Activated CD4-positive, alpha-beta T cell treated with anti-CD3 and anti-CD28 coated beads, Interleukin-2, amount 10 ng/mL, durations not matched to agents 24 days and 14 days (primary cell): ENCODE measurements at regions of chr6 and their contacts with region 1.

Region 1: GRCh38 chr6:90425161-90425641 is 128.6 kb upstream of the BACH2 start:
- DNase-seq: peak; percentile 78
- H3K4me3 Mint-ChIP-seq: peak overlapping the region; percentile 69
- H3K27ac Mint-ChIP-seq: peak overlapping the region; percentile 91
- H3K4me1 Mint-ChIP-seq: peaks cover 24% of the 10 kb centered on the region
- H3K27me3 Mint-ChIP-seq: no peaks in the 10 kb centered on the region

Region 2: DNA sequence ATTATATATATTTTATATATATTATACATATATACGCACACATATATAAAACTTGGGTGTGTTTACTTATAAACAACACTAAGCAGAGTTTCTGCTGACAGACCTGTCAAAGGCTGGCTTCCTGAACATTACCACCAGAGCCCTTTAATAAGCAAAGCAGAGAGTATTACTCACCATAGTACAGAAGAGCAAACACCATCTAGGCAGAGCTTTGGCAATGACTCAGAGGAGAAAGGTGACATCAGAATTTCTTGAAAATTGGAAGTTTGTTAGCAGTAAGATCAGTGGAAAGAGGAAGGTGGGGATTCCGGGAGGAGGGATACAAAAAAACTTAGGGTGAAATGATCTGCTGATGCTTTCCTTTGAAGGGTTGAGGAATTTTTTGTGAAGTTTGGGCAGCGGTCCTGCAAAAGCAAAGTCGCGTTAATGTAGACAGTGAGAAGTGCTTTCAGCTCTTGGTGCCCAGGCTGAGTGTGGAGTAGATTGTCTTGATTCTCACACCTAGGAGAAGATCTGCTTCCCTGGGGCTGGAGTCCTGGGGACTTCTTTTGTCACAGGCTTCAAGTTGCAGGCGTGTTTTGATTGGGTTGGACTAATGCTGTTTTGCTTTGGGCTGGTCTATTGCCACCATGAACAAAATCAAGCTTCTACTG is 18.9 kb before region 1 on chr6:
- intact Hi-C with region 1: loop called (anchors 1 kb)
- DNase-seq: peak; percentile 77
- H3K4me3 Mint-ChIP-seq: peak overlapping the region; percentile 12
- H3K27ac Mint-ChIP-seq: peak overlapping the region; percentile 82
- H3K4me1 Mint-ChIP-seq: peaks cover 67% of the 10 kb centered on the region
- H3K27me3 Mint-ChIP-seq: no peaks in the 10 kb centered on the region

Region 3: GRCh38 chr6:90411292-90411781 is 13.9 kb before region 1 on chr6:
- intact Hi-C with region 1: loop called (anchors 1 kb)
- DNase-seq: peak; percentile 86
- H3K4me3 Mint-ChIP-seq: peak overlapping the region; percentile 18
- H3K27ac Mint-ChIP-seq: peak overlapping the region; percentile 84
- H3K4me1 Mint-ChIP-seq: peaks cover 71% of the 10 kb centered on the region
- H3K27me3 Mint-ChIP-seq: peaks cover 2% of the 10 kb centered on the region

Region 4: DNA sequence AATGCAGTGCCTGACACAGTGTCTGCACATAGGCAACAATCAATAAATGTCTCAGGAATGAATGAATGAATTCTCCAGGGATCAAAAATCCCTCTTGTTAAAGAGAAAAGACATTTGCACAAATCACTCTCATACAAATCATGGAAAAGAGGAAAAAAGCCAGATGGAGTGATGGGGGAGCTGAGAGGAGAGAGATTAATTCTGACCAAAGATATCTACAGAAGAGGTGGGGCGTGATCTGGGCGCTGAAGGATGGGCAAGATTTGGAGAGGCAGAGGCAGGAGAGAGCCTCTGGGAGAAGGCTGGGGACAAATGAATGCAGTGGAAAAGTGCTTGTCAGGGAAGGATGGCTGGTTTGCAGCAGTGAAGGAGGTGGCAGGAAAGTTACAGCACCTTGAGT is 14.4 kb after region 1 on chr6:
- intact Hi-C with region 1: no loop called
- DNase-seq: no peak
- H3K4me3 Mint-ChIP-seq: no peak overlapping the region
- H3K27ac Mint-ChIP-seq: no peak overlapping the region
- H3K4me1 Mint-ChIP-seq: peaks cover 27% of the 10 kb centered on the region
- H3K27me3 Mint-ChIP-seq: no peaks in the 10 kb centered on the region

Region 5: GRCh38 chr6:90458353-90459224 is 33.4 kb after region 1 on chr6:
- intact Hi-C with region 1: loop called (anchors 1 kb)
- DNase-seq: peak; percentile 88
- H3K4me3 Mint-ChIP-seq: peak overlapping the region; percentile 54
- H3K27ac Mint-ChIP-seq: peak overlapping the region; percentile 91
- H3K4me1 Mint-ChIP-seq: peaks cover 66% of the 10 kb centered on the region
- H3K27me3 Mint-ChIP-seq: no peaks in the 10 kb centered on the region

Region 6: DNA sequence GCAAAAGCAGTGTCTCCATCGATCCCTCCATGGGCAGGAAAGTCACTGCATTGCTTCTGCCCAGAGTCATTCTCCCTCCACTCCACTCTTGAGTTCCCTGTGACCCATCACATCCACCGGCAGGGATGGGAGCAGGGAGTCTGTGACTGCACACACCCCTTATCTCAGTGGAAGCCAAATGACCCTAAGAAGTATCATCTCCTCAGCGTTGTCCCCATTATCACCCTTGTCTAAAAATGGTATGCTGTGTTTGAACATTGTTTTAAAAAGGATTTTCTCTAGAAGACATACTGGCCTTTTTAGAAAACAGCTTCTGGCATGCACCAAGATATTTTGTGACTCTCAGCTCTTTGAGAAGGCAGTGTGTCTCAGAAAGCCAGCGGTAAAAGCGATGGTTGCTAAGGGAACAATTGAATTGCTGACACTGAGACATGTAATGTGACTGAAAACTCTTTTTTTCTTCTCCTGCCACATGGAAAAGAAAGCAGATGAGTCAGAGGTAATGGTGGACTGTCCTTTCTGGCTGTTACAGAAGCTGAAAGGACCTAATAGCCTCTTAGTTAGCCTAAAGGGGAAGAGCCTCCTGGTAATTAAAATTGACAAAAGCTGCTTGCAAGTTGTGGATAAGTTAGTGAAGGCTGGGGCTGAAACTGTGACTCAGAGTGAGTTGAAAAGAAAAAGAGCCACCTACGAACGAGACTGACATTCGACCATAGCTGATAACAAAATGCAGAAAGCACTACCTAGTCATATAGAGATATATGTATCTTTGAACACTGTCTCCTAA is 41.1 kb after region 1 on chr6:
- intact Hi-C with region 1: loop called (anchors 1 kb)
- DNase-seq: peak; percentile 82
- H3K4me3 Mint-ChIP-seq: peak overlapping the region; percentile 46
- H3K27ac Mint-ChIP-seq: peak overlapping the region; percentile 90
- H3K4me1 Mint-ChIP-seq: peaks cover 80% of the 10 kb centered on the region
- H3K27me3 Mint-ChIP-seq: no peaks in the 10 kb centered on the region